Dendritic cell treated with granulocyte-macrophage colony-stimulating factor and Interleukin-4, amounts not matched to agents 40 ng/mL and 50 ng/mL, for 4 days (primary cell): ENCODE measurements at regions of chr6 and their contacts with region 1.

Region 1: GRCh38 chr6:97186416-97186999 is 96.5 kb downstream of the MMS22L start:
- H3K4me3 Mint-ChIP-seq: no peak overlapping the region
- H3K27ac Mint-ChIP-seq: no peak overlapping the region
- H3K4me1 Mint-ChIP-seq: no peaks in the 10 kb centered on the region
- H3K27me3 Mint-ChIP-seq: no peaks in the 10 kb centered on the region

Region 2: GRCh38 chr6:97068211-97068610 is 118.3 kb before region 1 on chr6:
- intact Hi-C with region 1: loop called (anchors 10 kb)
- H3K4me3 Mint-ChIP-seq: no peak overlapping the region
- H3K27ac Mint-ChIP-seq: no peak overlapping the region
- H3K4me1 Mint-ChIP-seq: no peaks in the 10 kb centered on the region
- H3K27me3 Mint-ChIP-seq: peaks cover 2% of the 10 kb centered on the region

Region 3: GRCh38 chr6:97215157-97215769 is 28.8 kb after region 1 on chr6:
- intact Hi-C with region 1: no loop called
- H3K4me3 Mint-ChIP-seq: no peak overlapping the region
- H3K27ac Mint-ChIP-seq: no peak overlapping the region
- H3K4me1 Mint-ChIP-seq: peaks cover 5% of the 10 kb centered on the region
- H3K27me3 Mint-ChIP-seq: no peaks in the 10 kb centered on the region

Region 4: GRCh38 chr6:97394160-97394748 is 207.7 kb after region 1 on chr6:
- intact Hi-C with region 1: loop called (anchors 1 kb)
- H3K4me3 Mint-ChIP-seq: no peak overlapping the region
- H3K27ac Mint-ChIP-seq: no peak overlapping the region
- H3K4me1 Mint-ChIP-seq: no peaks in the 10 kb centered on the region
- H3K27me3 Mint-ChIP-seq: no peaks in the 10 kb centered on the region

Region 5: GRCh38 chr6:98845211-98846020 is 1658.9 kb after region 1 on chr6:
- intact Hi-C with region 1: loop called (anchors 5 kb)
- H3K4me3 Mint-ChIP-seq: peak overlapping the region; percentile 35
- H3K27ac Mint-ChIP-seq: no peak overlapping the region
- H3K4me1 Mint-ChIP-seq: peaks cover 29% of the 10 kb centered on the region
- H3K27me3 Mint-ChIP-seq: peaks cover 95% of the 10 kb centered on the region

Region 6: GRCh38 chr6:99119109-99120031 is 1932.9 kb after region 1 on chr6:
- intact Hi-C with region 1: loop called (anchors 5 kb)
- H3K4me3 Mint-ChIP-seq: no peak overlapping the region
- H3K27ac Mint-ChIP-seq: no peak overlapping the region
- H3K4me1 Mint-ChIP-seq: no peaks in the 10 kb centered on the region
- H3K27me3 Mint-ChIP-seq: peaks cover 4% of the 10 kb centered on the region